ENCODE measurements at regions of chr19 and their contacts with region 1.

Region 1: DNA sequence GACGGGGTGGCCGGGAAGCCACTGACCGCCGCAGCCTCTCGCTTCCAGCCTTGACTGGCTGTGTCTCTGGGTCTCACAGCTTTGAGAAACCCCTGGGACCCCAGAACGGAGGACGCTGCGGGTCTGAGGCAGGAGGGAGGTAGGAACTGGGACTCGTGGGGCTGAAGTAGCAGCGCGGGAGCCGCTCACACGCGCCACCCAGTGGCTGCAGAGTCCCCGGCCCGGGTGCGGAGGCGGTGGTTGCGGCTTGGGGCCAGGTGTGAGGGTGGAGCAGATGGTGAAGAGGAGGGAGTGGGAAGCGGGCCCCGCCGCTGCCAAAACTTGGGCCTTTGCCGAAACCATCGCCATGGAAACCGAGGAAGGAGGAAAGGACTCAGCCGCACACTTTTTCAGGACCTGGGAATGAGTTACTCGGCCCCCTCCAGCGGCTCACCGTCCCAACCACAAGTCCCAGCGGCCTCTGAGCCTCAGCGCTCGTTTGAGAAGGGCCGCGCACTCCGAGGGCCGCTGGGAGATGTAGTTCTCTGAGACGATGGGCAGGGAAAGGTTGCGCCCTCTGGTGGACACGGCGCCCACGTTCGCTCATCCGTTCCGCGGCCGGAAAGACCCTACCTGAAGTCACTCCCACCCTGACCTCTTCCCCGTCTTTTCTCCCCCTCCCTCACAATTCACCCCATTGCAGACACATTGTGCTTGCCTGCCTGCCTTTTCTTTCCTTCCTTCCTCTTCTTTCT is 2.2 kb upstream of the SLC17A7 start:
- DNase-seq: peak; percentile 84 to 92
- H3K4me3 ChIP-seq: peak overlapping the region; percentile 83
- H3K27ac ChIP-seq: no peak overlapping the region
- H3K4me1 ChIP-seq: peaks cover 9% of the 10 kb centered on the region; the same call in 1 of the 2 replicates
- H3K27me3 ChIP-seq: peaks cover 25% of the 10 kb centered on the region
- CTCF ChIP-seq: peak; percentile 83

Region 2: DNA sequence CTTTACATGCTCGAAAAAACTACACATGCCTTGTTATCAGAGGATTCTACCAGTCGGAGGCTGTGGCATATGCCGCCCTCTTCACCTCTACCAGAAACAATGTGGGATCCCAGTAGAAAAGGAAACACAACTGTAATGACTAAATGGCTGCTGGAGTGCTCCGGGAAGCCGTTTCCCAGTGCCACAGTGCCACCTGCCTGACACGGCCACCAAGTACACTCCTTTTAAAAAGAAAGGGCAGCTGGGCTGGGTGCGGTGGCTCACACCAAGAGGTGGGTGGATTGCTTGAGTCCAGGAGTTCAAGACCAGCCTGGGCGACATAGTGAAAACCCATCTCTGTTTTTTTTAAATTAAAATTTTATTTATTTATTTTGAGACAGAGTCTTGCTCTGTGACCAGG is 218.7 kb before region 1 on chr19:
- CTCF ChIA-PET with region 1: no interaction called
- POLR2A ChIA-PET with region 1: no interaction called
- intact Hi-C with region 1: loop called (anchors 1 kb)
- DNase-seq: peak; percentile 73 to 84
- H3K4me3 ChIP-seq: no peak overlapping the region
- H3K27ac ChIP-seq: no peak overlapping the region
- H3K4me1 ChIP-seq: no peaks in the 10 kb centered on the region
- H3K27me3 ChIP-seq: no peaks in the 10 kb centered on the region
- CTCF ChIP-seq: peak; percentile 91

Region 3: GRCh38 chr19:49264258-49264657 is 179.3 kb before region 1 on chr19:
- CTCF ChIA-PET with region 1: no interaction called
- POLR2A ChIA-PET with region 1: no interaction called
- intact Hi-C with region 1: loop called (anchors 10 kb)
- DNase-seq: no peak
- H3K4me3 ChIP-seq: no peak overlapping the region
- H3K27ac ChIP-seq: no peak overlapping the region
- H3K4me1 ChIP-seq: no peaks in the 10 kb centered on the region
- H3K27me3 ChIP-seq: peaks cover 13% of the 10 kb centered on the region; the same call in 1 of the 2 replicates
- CTCF ChIP-seq: no peak

Region 4: GRCh38 chr19:49355909-49356353 is 87.6 kb before region 1 on chr19:
- CTCF ChIA-PET with region 1: no interaction called
- POLR2A ChIA-PET with region 1: no interaction called
- intact Hi-C with region 1: no loop called
- DNase-seq: no peak
- H3K4me3 ChIP-seq: no peak overlapping the region
- H3K27ac ChIP-seq: no peak overlapping the region
- H3K4me1 ChIP-seq: no peaks in the 10 kb centered on the region
- H3K27me3 ChIP-seq: no peaks in the 10 kb centered on the region
- CTCF ChIP-seq: no peak

Region 5: DNA sequence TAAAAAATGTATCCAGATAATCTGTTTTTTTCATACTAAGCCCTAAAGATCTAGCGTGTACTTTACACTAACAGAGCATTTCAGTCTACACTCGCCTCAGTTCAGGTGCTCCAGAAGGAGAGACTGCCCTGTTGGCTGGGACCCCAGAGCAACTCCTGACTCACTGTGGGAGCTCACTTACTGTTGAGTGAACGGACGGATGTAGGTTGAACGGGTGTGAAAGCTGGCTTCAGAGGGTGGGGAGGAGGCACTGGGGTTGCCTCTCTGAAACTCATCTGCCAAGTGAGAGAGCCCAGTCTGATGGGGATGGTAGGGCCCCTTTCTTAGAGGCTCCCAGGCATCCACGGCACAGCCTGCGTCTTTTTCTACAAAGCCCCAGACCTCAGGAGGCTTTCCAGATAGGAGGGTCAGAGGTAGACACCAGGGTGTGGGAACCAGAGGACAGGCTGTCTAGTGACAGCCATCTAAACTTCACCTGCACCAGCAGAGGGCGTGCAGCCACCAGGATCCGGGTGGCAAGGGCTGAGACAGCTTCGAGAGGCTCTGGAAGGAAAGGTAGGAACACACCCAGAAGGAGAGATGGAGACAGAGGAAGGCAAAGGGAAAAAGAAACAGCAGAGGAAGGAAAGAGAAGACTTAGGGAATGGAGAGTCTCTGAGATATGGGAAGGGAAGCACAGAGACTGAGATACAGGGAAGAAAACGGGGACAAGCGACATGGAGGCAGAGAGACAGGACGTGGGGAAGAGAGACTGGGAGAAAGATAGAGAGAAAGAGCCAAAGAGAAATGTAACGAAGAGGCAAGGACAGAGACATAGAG is 51.7 kb before region 1 on chr19:
- CTCF ChIA-PET with region 1: interaction called, 3 read pairs
- POLR2A ChIA-PET with region 1: no interaction called
- intact Hi-C with region 1: loop called (anchors 1 kb)
- DNase-seq: peak; percentile 61 to 77
- H3K4me3 ChIP-seq: no peak overlapping the region
- H3K27ac ChIP-seq: no peak overlapping the region
- H3K4me1 ChIP-seq: no peaks in the 10 kb centered on the region
- H3K27me3 ChIP-seq: peaks cover 22% of the 10 kb centered on the region
- CTCF ChIP-seq: peak; percentile 95

Region 6: GRCh38 chr19:49398001-49398615 is 45.4 kb before region 1 on chr19:
- CTCF ChIA-PET with region 1: no interaction called
- POLR2A ChIA-PET with region 1: interaction called, 12 read pairs
- intact Hi-C with region 1: no loop called
- DNase-seq: no peak
- H3K4me3 ChIP-seq: no peak overlapping the region
- H3K27ac ChIP-seq: no peak overlapping the region
- H3K4me1 ChIP-seq: no peaks in the 10 kb centered on the region; the same call in 1 of the 2 replicates
- H3K27me3 ChIP-seq: peaks cover 6% of the 10 kb centered on the region; the same call in 1 of the 2 replicates
- CTCF ChIP-seq: no peak

Region 7: GRCh38 chr19:49512970-49513745 is 69.6 kb after region 1 on chr19:
- CTCF ChIA-PET with region 1: no interaction called
- POLR2A ChIA-PET with region 1: no interaction called
- intact Hi-C with region 1: no loop called
- DNase-seq: no peak
- H3K4me3 ChIP-seq: no peak overlapping the region
- H3K27ac ChIP-seq: no peak overlapping the region
- H3K4me1 ChIP-seq: no peaks in the 10 kb centered on the region
- H3K27me3 ChIP-seq: peaks cover 10% of the 10 kb centered on the region; the same call in 1 of the 2 replicates
- CTCF ChIP-seq: no peak

Region 8: GRCh38 chr19:49528211-49528771 is 84.8 kb after region 1 on chr19:
- CTCF ChIA-PET with region 1: interaction called, 16 read pairs
- POLR2A ChIA-PET with region 1: no interaction called
- intact Hi-C with region 1: no loop called
- DNase-seq: no peak
- H3K4me3 ChIP-seq: peak overlapping the region; percentile 62; the same call in 1 of the 2 replicates
- H3K27ac ChIP-seq: no peak overlapping the region
- H3K4me1 ChIP-seq: no peaks in the 10 kb centered on the region; the same call in 1 of the 2 replicates
- H3K27me3 ChIP-seq: peaks cover 27% of the 10 kb centered on the region
- CTCF ChIP-seq: no peak

Measured in PC-9 (cell line).